ENCODE measurements at regions of chr6 and their contacts with region 1.

Region 1: GRCh38 chr6:2634139-2634964 is 116.4 kb downstream of the MYLK4 start:
- DNase-seq: peak; percentile 14
- H3K4me3 ChIP-seq: peak overlapping the region; percentile 54
- CTCF ChIP-seq: peak; percentile 98

Region 2: GRCh38 chr6:2471472-2471871 is 162.9 kb before region 1 on chr6:
- CTCF ChIA-PET with region 1: interaction called, 10 read pairs
- POLR2A ChIA-PET with region 1: no interaction called
- DNase-seq: no peak
- H3K4me3 ChIP-seq: no peak overlapping the region
- CTCF ChIP-seq: no peak

Region 3: DNA sequence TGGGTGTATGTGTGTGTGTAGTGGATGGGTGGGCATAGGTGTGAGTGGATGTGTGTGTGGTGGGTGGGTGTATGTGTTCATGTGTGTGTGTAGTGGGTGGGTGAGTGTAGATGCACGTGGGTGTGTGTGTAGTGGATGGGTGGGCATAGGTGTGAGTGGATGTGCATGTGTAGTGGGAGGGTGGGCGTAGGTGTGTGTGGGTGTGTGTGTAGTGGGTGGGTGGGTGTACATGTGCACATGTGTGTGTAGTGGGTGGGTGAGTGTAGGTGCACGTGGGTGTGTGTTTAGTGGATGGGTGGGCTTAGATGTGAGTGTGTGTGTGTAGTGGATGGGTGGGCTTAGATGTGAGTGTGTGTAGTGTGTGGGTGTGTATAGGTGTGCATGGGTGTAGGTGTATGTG is 12.0 kb after region 1 on chr6:
- CTCF ChIA-PET with region 1: interaction called, 47 read pairs
- POLR2A ChIA-PET with region 1: no interaction called
- DNase-seq: no peak
- H3K4me3 ChIP-seq: no peak overlapping the region
- CTCF ChIP-seq: no peak

Region 4: GRCh38 chr6:2653369-2654032 is 19.1 kb after region 1 on chr6:
- CTCF ChIA-PET with region 1: interaction called, 24 read pairs
- POLR2A ChIA-PET with region 1: no interaction called
- DNase-seq: no peak
- H3K4me3 ChIP-seq: no peak overlapping the region
- CTCF ChIP-seq: no peak

Region 5: GRCh38 chr6:2658788-2659187 is 24.4 kb after region 1 on chr6:
- CTCF ChIA-PET with region 1: interaction called, 24 read pairs
- POLR2A ChIA-PET with region 1: no interaction called
- DNase-seq: no peak
- H3K4me3 ChIP-seq: no peak overlapping the region
- CTCF ChIP-seq: no peak

Region 6: GRCh38 chr6:2680264-2680922 is 46.0 kb after region 1 on chr6:
- CTCF ChIA-PET with region 1: interaction called, 11 read pairs
- POLR2A ChIA-PET with region 1: no interaction called
- DNase-seq: no peak
- H3K4me3 ChIP-seq: no peak overlapping the region
- CTCF ChIP-seq: no peak